Activated B cell treated with CpG ODN at 0.5 μM for 24 hours (primary cell): ENCODE measurements at regions of chr9 and their contacts with region 1.

Region 1: DNA sequence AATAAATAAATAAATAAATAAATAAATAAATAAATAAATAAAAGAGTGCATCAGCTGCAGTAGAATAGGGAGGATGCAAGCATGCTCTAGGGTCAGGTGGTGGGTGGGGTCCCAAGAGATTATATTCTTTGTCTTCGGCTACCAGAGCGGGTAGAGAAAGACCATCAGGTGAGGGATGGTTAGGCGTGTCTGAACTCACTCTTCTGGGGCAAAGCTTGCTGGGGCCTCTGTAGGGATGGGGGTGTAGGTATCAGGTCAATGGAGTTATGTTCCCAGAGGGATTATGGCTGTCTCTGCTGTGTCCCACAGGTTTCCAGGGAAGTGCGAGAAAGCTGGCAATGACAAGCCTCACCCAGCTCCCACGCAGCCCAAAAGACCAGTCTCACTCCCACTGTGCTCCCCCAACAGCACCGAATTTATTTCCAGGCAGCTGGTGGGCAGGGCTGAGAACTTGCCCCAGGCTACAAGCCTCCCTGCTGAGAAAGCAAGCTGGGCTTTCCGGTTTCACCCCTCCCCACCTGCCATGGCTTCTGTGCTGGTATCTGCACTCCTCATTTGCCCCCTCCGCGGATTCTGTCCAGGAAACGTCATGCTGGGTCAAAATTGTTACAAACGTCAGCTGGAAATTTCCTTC is 180.8 kb downstream of the LURAP1L start:
- DNase-seq: no peak
- ATAC-seq: no peak
- H3K4me3 Mint-ChIP-seq: no peak overlapping the region
- H3K27ac Mint-ChIP-seq: no peak overlapping the region
- H3K4me1 Mint-ChIP-seq: no peaks in the 10 kb centered on the region
- H3K27me3 Mint-ChIP-seq: no peaks in the 10 kb centered on the region
- CTCF ChIP-seq: no peak

Region 2: GRCh38 chr9:12878356-12878978 is 77.2 kb before region 1 on chr9:
- CTCF ChIA-PET with region 1: no interaction called
- POLR2A ChIA-PET with region 1: no interaction called
- intact Hi-C with region 1: no loop called
- DNase-seq: no peak
- ATAC-seq: no peak
- H3K4me3 Mint-ChIP-seq: no peak overlapping the region
- H3K27ac Mint-ChIP-seq: no peak overlapping the region
- H3K4me1 Mint-ChIP-seq: no peaks in the 10 kb centered on the region
- H3K27me3 Mint-ChIP-seq: no peaks in the 10 kb centered on the region
- CTCF ChIP-seq: no peak

Region 3: DNA sequence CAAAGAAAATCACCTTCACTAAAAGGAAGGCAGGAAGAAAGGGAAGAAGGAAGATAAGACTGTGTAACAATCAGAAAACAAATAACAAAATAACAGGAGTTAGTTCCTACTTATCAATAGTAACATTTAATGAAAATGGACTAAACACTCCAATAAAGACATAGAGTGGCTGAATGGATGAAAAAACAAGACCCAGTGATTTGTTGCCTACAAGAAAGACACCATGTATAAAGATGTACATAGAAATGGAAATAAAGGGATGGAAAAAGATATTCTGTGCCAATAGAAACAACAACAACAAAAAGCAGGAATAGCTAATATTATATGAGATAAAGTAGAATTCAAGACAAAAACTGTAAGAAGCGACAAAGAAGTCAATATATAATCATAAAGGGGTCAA is 64.1 kb before region 1 on chr9:
- CTCF ChIA-PET with region 1: no interaction called
- POLR2A ChIA-PET with region 1: no interaction called
- intact Hi-C with region 1: no loop called
- DNase-seq: no peak
- ATAC-seq: no peak
- H3K4me3 Mint-ChIP-seq: no peak overlapping the region
- H3K27ac Mint-ChIP-seq: no peak overlapping the region
- H3K4me1 Mint-ChIP-seq: no peaks in the 10 kb centered on the region
- H3K27me3 Mint-ChIP-seq: no peaks in the 10 kb centered on the region
- CTCF ChIP-seq: no peak

Region 4: GRCh38 chr9:12972608-12973589 is 17.3 kb after region 1 on chr9:
- CTCF ChIA-PET with region 1: no interaction called
- POLR2A ChIA-PET with region 1: no interaction called
- intact Hi-C with region 1: no loop called
- DNase-seq: no peak
- ATAC-seq: no peak
- H3K4me3 Mint-ChIP-seq: no peak overlapping the region
- H3K27ac Mint-ChIP-seq: no peak overlapping the region
- H3K4me1 Mint-ChIP-seq: no peaks in the 10 kb centered on the region
- H3K27me3 Mint-ChIP-seq: no peaks in the 10 kb centered on the region
- CTCF ChIP-seq: no peak

Region 5: GRCh38 chr9:13009871-13010270 is 54.2 kb after region 1 on chr9:
- CTCF ChIA-PET with region 1: no interaction called
- POLR2A ChIA-PET with region 1: no interaction called
- intact Hi-C with region 1: loop called (anchors 5 kb)
- DNase-seq: no peak
- ATAC-seq: no peak
- H3K4me3 Mint-ChIP-seq: no peak overlapping the region
- H3K27ac Mint-ChIP-seq: no peak overlapping the region
- H3K4me1 Mint-ChIP-seq: no peaks in the 10 kb centered on the region
- H3K27me3 Mint-ChIP-seq: no peaks in the 10 kb centered on the region
- CTCF ChIP-seq: no peak

Region 6: DNA sequence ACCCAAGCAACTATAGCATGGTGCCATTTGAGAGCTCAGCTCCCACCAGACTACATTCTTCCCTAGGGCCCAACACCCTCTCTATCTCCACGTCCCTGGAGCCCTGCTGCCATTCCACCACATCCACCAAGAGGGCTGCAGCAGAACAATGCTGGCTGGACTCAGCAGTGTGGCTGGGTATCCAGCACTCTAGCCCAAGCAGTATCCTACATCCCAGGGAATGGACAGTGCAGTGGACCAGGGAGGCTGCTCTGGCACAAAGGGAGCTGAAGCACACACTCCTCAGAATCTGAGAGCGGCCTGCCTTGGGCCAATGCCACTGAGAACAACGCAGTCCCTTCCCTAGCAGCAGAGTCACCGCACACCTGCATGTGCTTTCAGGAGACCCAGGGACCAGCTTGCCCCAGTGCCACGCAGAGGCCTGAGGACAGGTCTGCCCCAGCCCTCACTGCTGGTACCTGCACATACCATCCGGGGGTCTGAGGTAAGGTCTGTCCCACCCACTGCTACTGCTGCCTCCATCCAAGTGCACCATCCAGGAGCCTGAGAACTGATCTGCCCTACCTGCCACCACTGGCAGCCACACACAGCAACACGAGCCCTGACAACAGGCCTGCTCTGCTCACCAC is 1641.6 kb after region 1 on chr9:
- CTCF ChIA-PET with region 1: no interaction called
- POLR2A ChIA-PET with region 1: no interaction called
- intact Hi-C with region 1: no loop called
- DNase-seq: no peak
- ATAC-seq: no peak
- H3K4me3 Mint-ChIP-seq: no peak overlapping the region
- H3K27ac Mint-ChIP-seq: no peak overlapping the region
- H3K4me1 Mint-ChIP-seq: no peaks in the 10 kb centered on the region
- H3K27me3 Mint-ChIP-seq: no peaks in the 10 kb centered on the region
- CTCF ChIP-seq: no peak